PC-3 (cell line): ENCODE measurements at regions of chrX and their contacts with region 1.

Region 1: DNA sequence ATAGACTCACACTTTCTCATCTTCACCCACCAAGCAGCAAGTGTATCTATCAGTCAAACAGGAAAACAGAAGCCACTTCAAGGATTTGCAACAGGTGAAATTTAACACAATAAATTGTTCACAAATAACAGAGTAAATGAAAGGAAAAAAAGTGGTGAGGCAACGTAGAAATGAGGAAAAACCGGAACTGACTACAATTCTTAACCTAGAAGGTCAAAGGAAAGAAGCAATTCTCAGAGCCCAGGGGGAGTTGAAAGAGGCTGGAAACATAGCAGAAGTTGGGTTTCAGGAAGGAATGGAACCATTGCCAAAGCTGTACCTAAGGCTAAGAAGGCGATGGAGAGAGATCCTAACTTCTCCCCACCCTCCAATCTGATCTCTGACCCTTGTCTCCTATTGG is 76.9 kb upstream of the MAOA start:
- DNase-seq: no peak
- ATAC-seq: no peak
- H3K4me3 ChIP-seq: no peak overlapping the region
- H3K27ac ChIP-seq: no peak overlapping the region
- H3K4me1 ChIP-seq: peaks cover 8% of the 10 kb centered on the region; the same call in 1 of the 2 replicates
- H3K27me3 ChIP-seq: no peaks in the 10 kb centered on the region
- CTCF ChIP-seq: no peak

Region 2: GRCh38 chrX:43595931-43596330 is 16.7 kb after region 1 on chrX:
- CTCF ChIA-PET with region 1: interaction called, 11 read pairs
- POLR2A ChIA-PET with region 1: no interaction called
- intact Hi-C with region 1: no loop called
- DNase-seq: no peak
- ATAC-seq: no peak
- H3K4me3 ChIP-seq: no peak overlapping the region
- H3K27ac ChIP-seq: no peak overlapping the region
- H3K4me1 ChIP-seq: peaks cover 22% of the 10 kb centered on the region
- H3K27me3 ChIP-seq: no peaks in the 10 kb centered on the region
- CTCF ChIP-seq: no peak